A673 (cell line): ENCODE measurements at regions of chr3 and their contacts with region 1.

Region 1: GRCh38 chr3:177351206-177352158 is 154.2 kb upstream of the TBL1XR1 start:
- DNase-seq: no peak
- H3K4me3 ChIP-seq: no peak overlapping the region
- H3K27ac ChIP-seq: peak overlapping the region; percentile 70
- H3K4me1 ChIP-seq: peaks cover 42% of the 10 kb centered on the region
- H3K27me3 ChIP-seq: no peaks in the 10 kb centered on the region
- CTCF ChIP-seq: no peak

Region 2: GRCh38 chr3:177284383-177284881 is 67.0 kb before region 1 on chr3:
- CTCF ChIA-PET with region 1: no interaction called
- POLR2A ChIA-PET with region 1: no interaction called
- intact Hi-C with region 1: loop called (anchors 5 kb)
- DNase-seq: peak; percentile 95
- H3K4me3 ChIP-seq: no peak overlapping the region
- H3K27ac ChIP-seq: peak overlapping the region; percentile 57
- H3K4me1 ChIP-seq: peaks cover 36% of the 10 kb centered on the region
- H3K27me3 ChIP-seq: no peaks in the 10 kb centered on the region
- CTCF ChIP-seq: peak; percentile 19; the same call in 1 of the 2 replicates